ENCODE measurements at regions of chr6 and their contacts with region 1.

Region 1: GRCh38 chr6:90478789-90479602 is 107.9 kb downstream of the MAP3K7 start:
- DNase-seq: peak; percentile 94
- ATAC-seq: peak; percentile 99
- H3K4me3 ChIP-seq: no peak overlapping the region
- H3K27ac ChIP-seq: peak overlapping the region; percentile 48
- H3K4me1 ChIP-seq: peaks cover 13% of the 10 kb centered on the region
- H3K27me3 ChIP-seq: no peaks in the 10 kb centered on the region
- CTCF ChIP-seq: peak; percentile 82

Region 2: GRCh38 chr6:89970609-89971337 is 508.2 kb before region 1 on chr6:
- CTCF ChIA-PET with region 1: interaction called, 3 read pairs
- POLR2A ChIA-PET with region 1: no interaction called
- intact Hi-C with region 1: loop called (anchors 1 kb)
- DNase-seq: peak; percentile 73
- ATAC-seq: peak; percentile 90
- H3K4me3 ChIP-seq: no peak overlapping the region
- H3K27ac ChIP-seq: peak overlapping the region; percentile 25
- H3K4me1 ChIP-seq: peaks cover 14% of the 10 kb centered on the region
- H3K27me3 ChIP-seq: no peaks in the 10 kb centered on the region
- CTCF ChIP-seq: peak; percentile 70

Region 3: GRCh38 chr6:90098001-90098531 is 380.9 kb before region 1 on chr6:
- CTCF ChIA-PET with region 1: no interaction called
- POLR2A ChIA-PET with region 1: no interaction called
- intact Hi-C with region 1: loop called (anchors 1 kb)
- DNase-seq: peak; percentile 58
- ATAC-seq: peak; percentile 96
- H3K4me3 ChIP-seq: no peak overlapping the region
- H3K27ac ChIP-seq: 0 out of 2 replicates have a peak overlapping the region, but pooled peaks have one; percentile 18
- H3K4me1 ChIP-seq: peaks cover 13% of the 10 kb centered on the region
- H3K27me3 ChIP-seq: no peaks in the 10 kb centered on the region
- CTCF ChIP-seq: peak; percentile 52

Region 4: GRCh38 chr6:90296346-90297114 is 182.5 kb before region 1 on chr6 and contains the start of gene BACH2:
- CTCF ChIA-PET with region 1: no interaction called
- POLR2A ChIA-PET with region 1: no interaction called
- intact Hi-C with region 1: loop called (anchors 2 kb)
- DNase-seq: peak; percentile 84
- ATAC-seq: peak; percentile 70
- H3K4me3 ChIP-seq: peak within 1 kb of the TSS; percentile 90
- H3K27ac ChIP-seq: no peak within 1 kb of the TSS
- H3K4me1 ChIP-seq: 0 out of 2 replicates have a peak, but pooled peaks cover 4% of the 10 kb centered on the region
- H3K27me3 ChIP-seq: no peaks in the 10 kb centered on the region
- CTCF ChIP-seq: no peak
- total RNA-seq, gene BACH2: 4.8 and 7.0 TPM in 2 replicates

Region 5: GRCh38 chr6:90343581-90343980 is 135.4 kb before region 1 on chr6:
- CTCF ChIA-PET with region 1: no interaction called
- POLR2A ChIA-PET with region 1: no interaction called
- intact Hi-C with region 1: no loop called
- DNase-seq: peak; percentile 54
- ATAC-seq: peak; percentile 48; the same call in 1 of the 2 replicates
- H3K4me3 ChIP-seq: no peak overlapping the region
- H3K27ac ChIP-seq: no peak overlapping the region
- H3K4me1 ChIP-seq: no peaks in the 10 kb centered on the region
- H3K27me3 ChIP-seq: no peaks in the 10 kb centered on the region
- CTCF ChIP-seq: no peak; the same call in 1 of the 2 replicates

Region 6: GRCh38 chr6:90406142-90406794 is 72.7 kb before region 1 on chr6:
- CTCF ChIA-PET with region 1: no interaction called
- POLR2A ChIA-PET with region 1: no interaction called
- intact Hi-C with region 1: loop called (anchors 1 kb)
- DNase-seq: peak; percentile 90
- ATAC-seq: peak; percentile 99
- H3K4me3 ChIP-seq: no peak overlapping the region
- H3K27ac ChIP-seq: peak overlapping the region; percentile 82
- H3K4me1 ChIP-seq: peaks cover 48% of the 10 kb centered on the region
- H3K27me3 ChIP-seq: no peaks in the 10 kb centered on the region
- CTCF ChIP-seq: no peak